ENCODE measurements at regions of chr9 and their contacts with region 1.

Region 1: DNA sequence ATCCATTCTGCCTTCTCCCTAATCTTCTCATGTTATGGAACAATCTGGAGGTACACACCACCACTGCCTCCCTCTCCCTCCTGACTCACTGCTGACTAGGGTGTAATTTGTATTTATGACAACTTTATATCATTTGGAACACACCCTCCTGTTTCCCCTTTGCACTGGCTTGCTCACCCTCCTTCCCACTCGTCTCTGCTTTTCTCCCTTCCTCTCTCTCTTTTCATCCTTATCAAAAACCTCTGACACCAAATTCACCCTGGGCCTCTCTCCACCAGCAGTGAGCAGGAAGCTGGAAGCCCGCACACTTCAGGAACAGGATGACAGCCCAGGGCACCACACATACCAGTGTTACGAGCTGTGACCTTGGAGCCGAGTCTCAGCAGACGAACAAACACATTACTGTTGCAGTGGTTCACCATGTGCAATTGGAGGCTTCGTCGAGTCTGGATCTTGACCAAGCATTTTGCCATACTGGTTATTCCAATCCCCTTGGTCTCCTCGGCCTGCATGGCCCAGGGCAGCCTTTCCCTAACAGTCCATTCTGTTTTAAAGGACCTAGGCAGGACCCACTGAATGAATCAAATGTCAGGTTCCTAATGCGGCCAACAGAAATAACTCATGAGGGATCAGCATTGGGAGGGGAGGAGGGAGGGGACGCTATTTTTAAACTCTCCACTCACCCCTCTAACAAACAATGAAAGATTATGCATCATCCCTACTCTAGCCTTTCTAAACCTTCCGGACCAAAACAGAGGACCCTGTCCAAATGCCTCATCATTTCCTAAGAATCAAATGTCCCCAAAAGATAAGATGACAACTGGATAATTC is 203.9 kb upstream of the RASEF start:
- DNase-seq: peak; percentile 62
- ATAC-seq: peak; percentile 93

Region 2: GRCh38 chr9:83177747-83178146 is 89.1 kb before region 1 on chr9:
- intact Hi-C with region 1: no loop called
- DNase-seq: no peak
- ATAC-seq: no peak

Region 3: DNA sequence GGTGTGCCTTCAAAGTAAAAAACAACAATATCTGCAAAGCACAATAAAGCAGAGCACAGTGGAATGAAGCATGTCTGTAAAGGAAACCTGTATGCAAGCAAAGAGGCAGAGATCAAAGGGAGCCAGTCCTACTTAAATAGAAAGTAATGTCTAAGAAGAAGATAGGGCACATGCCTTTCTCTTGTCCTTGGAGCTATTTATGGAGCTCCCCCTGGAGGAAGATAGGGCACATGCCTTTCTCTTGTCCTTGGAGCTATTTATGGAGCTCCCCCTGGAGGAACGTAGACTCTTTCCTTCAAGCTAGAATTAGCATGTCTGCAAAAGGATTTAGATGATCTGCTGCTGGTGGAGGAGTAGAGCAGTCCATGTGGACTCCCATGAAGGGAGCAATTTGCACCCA is 35.8 kb before region 1 on chr9:
- intact Hi-C with region 1: loop called (anchors 5 kb)
- DNase-seq: no peak
- ATAC-seq: peak; percentile 42

Region 4: GRCh38 chr9:83245979-83246659 is 20.8 kb before region 1 on chr9:
- intact Hi-C with region 1: loop called (anchors 1 kb)
- DNase-seq: no peak
- ATAC-seq: peak; percentile 87